ENCODE measurements at regions of chr13 and their contacts with region 1.

Region 1: GRCh38 chr13:97109841-97110492 is 112.2 kb upstream of the MBNL2 start:
- DNase-seq: peak; percentile 94
- H3K4me3 Mint-ChIP-seq: peak overlapping the region; percentile 45
- H3K27ac Mint-ChIP-seq: no peak overlapping the region
- H3K4me1 Mint-ChIP-seq: peaks cover 6% of the 10 kb centered on the region
- H3K27me3 Mint-ChIP-seq: peaks cover 27% of the 10 kb centered on the region

Region 2: GRCh38 chr13:96967248-96967745 is 142.7 kb before region 1 on chr13:
- intact Hi-C with region 1: no loop called
- DNase-seq: no peak
- H3K4me3 Mint-ChIP-seq: no peak overlapping the region
- H3K27ac Mint-ChIP-seq: no peak overlapping the region
- H3K4me1 Mint-ChIP-seq: no peaks in the 10 kb centered on the region
- H3K27me3 Mint-ChIP-seq: no peaks in the 10 kb centered on the region

Region 3: GRCh38 chr13:97091196-97091595 is 18.8 kb before region 1 on chr13:
- intact Hi-C with region 1: no loop called
- DNase-seq: no peak
- H3K4me3 Mint-ChIP-seq: no peak overlapping the region
- H3K27ac Mint-ChIP-seq: no peak overlapping the region
- H3K4me1 Mint-ChIP-seq: no peaks in the 10 kb centered on the region
- H3K27me3 Mint-ChIP-seq: peaks cover 2% of the 10 kb centered on the region

Region 4: DNA sequence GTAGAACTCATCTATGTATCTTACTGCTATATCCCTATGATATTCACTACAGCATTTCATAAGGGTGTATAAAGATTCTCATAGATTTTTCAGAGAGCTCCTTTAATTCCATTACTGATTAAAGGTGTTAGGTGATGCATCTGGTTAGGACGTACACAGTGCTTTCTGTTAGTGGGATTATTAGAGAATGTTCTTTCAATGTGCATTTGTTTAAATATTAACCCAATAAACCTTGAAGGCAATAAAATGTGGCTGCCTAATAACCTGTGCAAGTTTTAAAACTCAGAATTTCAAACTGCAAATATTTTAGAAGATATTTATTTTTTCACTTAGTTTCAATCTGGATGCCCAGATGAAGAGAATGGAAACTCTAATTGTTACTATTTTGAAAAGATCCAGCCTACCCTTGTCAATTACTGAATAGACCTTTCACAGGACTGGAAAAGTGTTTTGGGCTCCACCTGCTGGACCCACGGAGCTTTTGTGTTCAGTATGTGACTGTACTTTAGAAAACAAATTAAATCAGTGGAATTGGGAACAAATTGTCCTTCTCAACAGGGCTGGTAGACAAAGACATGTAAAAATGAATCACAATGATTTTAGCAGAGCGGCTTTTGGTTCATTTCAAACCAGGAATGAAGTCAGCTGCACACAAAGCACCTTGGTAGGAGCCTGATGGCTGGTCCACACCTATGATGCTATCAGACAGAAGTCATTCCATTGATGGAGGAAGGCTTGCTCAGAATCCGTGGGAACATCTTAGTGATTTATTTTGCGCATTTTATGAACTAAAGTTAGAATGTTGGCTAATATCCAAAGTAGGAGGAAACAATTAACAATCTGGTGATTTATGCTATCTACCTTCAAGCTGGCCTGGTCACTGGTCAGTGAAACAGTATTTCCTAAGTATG is 234.6 kb after region 1 on chr13:
- intact Hi-C with region 1: loop called (anchors 1 kb)
- DNase-seq: peak; percentile 81
- H3K4me3 Mint-ChIP-seq: no peak overlapping the region
- H3K27ac Mint-ChIP-seq: no peak overlapping the region
- H3K4me1 Mint-ChIP-seq: no peaks in the 10 kb centered on the region
- H3K27me3 Mint-ChIP-seq: no peaks in the 10 kb centered on the region

Region 5: GRCh38 chr13:97359181-97360057 is 249.5 kb after region 1 on chr13:
- intact Hi-C with region 1: loop called (anchors 1 kb)
- DNase-seq: peak; percentile 83
- H3K4me3 Mint-ChIP-seq: no peak overlapping the region
- H3K27ac Mint-ChIP-seq: no peak overlapping the region
- H3K4me1 Mint-ChIP-seq: no peaks in the 10 kb centered on the region
- H3K27me3 Mint-ChIP-seq: no peaks in the 10 kb centered on the region

Measured in activated CD4-positive, alpha-beta T cell treated with anti-CD3 and anti-CD28 coated beads, Interleukin-2, amount 10 ng/mL, durations not matched to agents 24 days and 14 days (primary cell).